Calu3 (cell line): ENCODE measurements at regions of chr7 and their contacts with region 1.

Region 1: DNA sequence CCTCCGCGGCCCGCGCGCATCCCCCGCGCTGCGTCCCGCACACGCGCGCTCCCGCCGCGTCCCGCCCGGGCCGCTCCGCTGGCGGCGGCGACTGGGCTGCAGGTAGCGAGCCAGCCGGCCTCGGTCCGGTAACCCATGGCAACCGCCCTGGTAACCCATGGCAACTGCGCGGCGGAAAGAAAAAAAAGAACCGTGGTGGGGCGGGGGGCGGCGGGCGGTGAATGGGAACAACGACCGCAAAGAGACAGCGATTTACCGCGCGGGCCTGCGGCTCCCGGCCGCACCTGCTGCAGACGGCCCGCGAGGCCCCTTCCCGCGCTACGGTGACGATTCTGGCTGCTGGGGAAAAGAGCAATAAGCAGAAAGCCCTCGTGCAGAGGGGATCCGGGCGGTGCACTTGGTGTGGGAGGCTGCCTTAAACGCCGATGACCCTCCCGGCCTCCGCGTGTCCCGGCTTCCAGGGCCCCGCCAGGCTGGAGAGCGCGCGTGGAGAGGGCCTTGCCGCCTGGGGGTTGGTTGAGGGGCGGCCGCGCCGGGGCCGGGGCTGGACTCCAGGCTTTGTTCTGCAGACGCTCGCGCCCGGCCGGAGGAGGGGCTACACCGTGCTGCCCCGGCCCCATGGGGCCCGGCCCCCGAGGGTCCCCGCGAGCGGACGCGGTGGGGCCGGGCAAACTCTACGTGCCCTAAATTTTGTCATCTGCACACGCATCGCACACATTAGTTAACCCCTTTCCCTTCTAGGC is 84.7 kb downstream of the SNX10 start:
- DNase-seq: peak; percentile 84
- H3K4me3 Mint-ChIP-seq: peak overlapping the region; percentile 90
- H3K27ac Mint-ChIP-seq: peak overlapping the region; percentile 64
- H3K4me1 Mint-ChIP-seq: peaks cover 6% of the 10 kb centered on the region
- H3K27me3 Mint-ChIP-seq: no peaks in the 10 kb centered on the region
- CTCF ChIP-seq: no peak

Region 2: DNA sequence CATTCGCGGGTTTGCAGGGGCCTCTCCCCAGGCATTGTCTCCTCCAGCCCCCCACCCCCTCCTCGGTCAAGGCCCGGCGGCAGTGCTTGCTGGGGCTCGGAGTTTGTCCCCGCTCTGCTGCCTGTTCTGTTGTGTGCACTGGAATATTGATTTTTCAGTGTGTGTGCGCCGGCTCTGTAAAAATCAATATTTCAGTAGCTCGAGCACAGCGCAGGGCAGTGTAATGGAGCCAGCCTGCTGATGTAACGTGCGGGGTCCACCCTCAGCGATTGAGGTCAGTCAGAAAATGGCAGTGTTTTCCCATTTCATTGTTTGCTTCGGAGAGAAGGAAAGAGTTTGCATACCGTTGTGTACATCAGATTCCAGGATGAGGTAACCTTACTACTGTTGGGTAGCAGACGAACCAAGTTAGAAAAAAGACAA is 423.7 kb before region 1 on chr7:
- CTCF ChIA-PET with region 1: no interaction called
- intact Hi-C with region 1: no loop called
- DNase-seq: peak; percentile 73
- H3K4me3 Mint-ChIP-seq: peak overlapping the region; percentile 70
- H3K27ac Mint-ChIP-seq: peak overlapping the region; percentile 6
- H3K4me1 Mint-ChIP-seq: peaks cover 11% of the 10 kb centered on the region
- H3K27me3 Mint-ChIP-seq: no peaks in the 10 kb centered on the region
- CTCF ChIP-seq: no peak

Region 3: DNA sequence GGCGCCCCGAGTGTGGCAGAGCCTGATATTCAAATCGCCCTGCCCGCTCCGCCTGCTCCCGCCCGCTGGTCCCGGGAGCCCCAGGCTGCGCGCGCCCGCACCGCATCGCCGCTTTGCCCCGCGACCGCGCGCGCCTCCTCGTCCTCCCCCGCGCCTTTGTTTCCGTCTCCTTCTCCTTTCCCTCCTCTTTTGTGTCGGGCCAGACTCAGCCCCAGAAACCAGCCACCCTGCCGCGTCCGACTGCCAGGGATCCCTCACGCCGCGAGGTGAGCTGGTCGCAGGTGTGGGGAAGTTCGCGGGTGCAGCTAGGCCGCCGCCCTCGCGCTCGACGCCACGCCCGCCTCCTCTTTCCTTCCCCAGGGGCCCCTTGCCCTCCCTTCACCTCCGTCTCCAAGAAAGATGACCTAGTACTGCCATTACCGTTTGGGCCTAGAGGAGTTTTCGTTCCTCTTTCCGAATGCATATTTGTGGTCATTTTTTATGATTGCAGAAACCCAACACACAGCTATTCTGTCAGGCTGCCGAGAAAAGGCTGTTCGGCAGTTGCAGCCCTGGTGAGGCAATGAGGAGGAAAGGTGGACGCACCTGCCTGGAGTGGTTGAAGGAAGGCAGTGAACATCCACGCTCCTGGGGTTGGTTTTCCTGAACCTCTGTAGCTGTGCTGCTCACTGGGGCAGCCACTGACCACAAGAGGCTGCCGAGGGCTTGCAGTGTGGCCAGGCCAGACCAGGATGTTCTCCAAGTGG is 22.6 kb after region 1 on chr7:
- CTCF ChIA-PET with region 1: interaction called, 12 read pairs
- intact Hi-C with region 1: no loop called
- DNase-seq: peak; percentile 72
- H3K4me3 Mint-ChIP-seq: peak overlapping the region; percentile 92
- H3K27ac Mint-ChIP-seq: peak overlapping the region; percentile 72
- H3K4me1 Mint-ChIP-seq: peaks cover 38% of the 10 kb centered on the region
- H3K27me3 Mint-ChIP-seq: no peaks in the 10 kb centered on the region
- CTCF ChIP-seq: no peak